Heart left ventricle (tissue), 16 donors: ENCODE measurements at regions of chr9 and their contacts with region 1.

Region 1: DNA sequence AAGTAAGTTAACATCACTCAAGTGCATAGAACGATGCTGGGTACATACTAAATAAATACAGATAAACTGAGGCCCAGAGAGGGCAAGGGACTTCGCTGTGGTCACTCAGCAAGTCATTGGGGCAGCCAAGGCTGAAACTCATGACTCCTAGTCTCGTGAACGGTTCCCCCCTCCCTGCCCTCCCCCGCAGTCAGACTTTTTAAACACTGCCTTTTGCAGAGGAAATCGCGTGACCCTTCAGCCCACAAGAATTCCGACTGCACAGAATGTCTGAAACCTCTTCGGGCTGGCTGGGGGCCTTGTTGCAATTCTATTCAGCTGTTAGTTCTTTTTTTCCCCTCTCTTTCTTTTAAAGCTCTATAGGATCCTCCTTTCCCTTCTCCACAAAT is 28.1 kb downstream of the NEK6 start:
- DNase-seq: peak; percentile 74 to 76 (median 74)
- ATAC-seq: peak in 3 of 4 donors; percentile 5 to 43 (median 30)
- H3K4me3 ChIP-seq: peak overlapping the region in 1 of 12 donors; percentile 28
- H3K27ac ChIP-seq: peak overlapping the region in 11 of 12 donors; percentile 43 to 88 (median 72)
- H3K4me1 ChIP-seq: peaks cover 15 to 94% (median 62%) of the 10 kb centered on the region in 12 donors
- H3K27me3 ChIP-seq: no peaks in the 10 kb centered on the region
- CTCF ChIP-seq: no peak
- POLR2A ChIP-seq: no peak

Region 2: DNA sequence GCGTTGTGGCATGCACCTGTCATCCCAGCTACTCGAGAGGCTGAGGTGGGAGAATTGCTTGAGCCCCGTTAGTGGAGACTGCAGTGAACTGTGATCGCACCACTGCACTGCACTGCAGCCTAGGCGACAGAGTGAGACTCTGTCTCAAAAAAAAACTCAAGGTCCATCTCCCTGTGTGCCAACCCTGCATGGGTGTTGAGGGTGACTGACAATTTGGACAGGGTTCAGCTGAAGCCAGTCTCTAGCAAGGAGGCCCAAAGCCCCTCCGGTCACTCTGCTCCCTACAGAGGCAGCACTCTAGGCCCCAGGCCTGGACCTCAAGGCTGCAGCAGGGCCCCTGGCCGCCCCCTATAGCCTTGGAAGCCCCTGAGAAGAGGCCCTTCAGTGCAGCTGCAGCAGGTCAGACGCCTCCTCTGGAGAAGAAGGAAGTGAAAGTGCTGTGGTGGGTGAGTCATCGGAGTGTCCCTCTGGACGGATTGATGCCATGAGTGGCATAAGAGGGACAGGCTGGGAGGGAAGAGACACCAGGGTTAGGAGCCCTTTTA is 67.4 kb before region 1 on chr9:
- intact Hi-C with region 1: loop called in 1 of 10 experiments (anchors 10 kb)
- DNase-seq: peak; percentile 42 to 70 (median 61)
- ATAC-seq: peak in 3 of 4 donors; percentile 49 to 70 (median 61)
- H3K4me3 ChIP-seq: no peak overlapping the region
- H3K27ac ChIP-seq: peak overlapping the region in 1 of 12 donors; percentile 86
- H3K4me1 ChIP-seq: peaks cover 2 to 100% (median 32%) of the 10 kb centered on the region in 12 donors
- H3K27me3 ChIP-seq: no peaks in the 10 kb centered on the region
- CTCF ChIP-seq: no peak
- POLR2A ChIP-seq: no peak

Region 3: DNA sequence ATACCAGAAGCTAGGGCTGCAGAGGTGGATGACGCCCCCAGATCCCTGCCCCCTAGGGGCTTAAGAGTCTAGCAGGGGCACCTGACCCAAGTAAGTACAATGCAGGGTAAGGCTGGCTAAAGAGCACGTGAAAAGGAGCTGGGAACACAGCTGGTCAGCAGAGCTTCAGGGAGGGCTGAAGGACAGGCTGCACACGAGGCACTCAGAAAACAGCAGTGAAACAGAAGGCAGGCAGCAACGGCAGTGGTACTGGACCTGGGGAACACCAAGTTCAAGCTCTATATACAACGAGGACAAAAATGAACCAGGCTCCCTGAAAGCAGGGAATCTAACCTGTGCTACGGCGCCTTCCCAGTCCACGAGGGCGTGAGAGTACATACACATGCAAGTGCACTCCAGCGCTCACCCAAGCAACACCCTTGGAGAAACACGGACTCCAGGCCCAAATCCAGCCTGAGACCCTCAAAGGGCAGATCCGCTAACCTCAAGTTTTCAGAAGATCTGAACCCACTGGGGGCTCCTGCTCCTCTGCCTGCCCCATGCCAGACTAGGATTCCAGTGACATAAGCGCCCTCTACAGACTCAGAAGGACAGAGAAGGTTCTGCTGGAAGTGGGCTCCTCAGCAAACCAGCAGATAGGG is 71.9 kb after region 1 on chr9:
- intact Hi-C with region 1: no loop called
- DNase-seq: no peak
- ATAC-seq: peak in 2 of 4 donors; percentile 6 to 46
- H3K4me3 ChIP-seq: no peak overlapping the region
- H3K27ac ChIP-seq: no peak overlapping the region
- H3K4me1 ChIP-seq: peaks cover 0 to 47% (median 13%) of the 10 kb centered on the region in 12 donors
- H3K27me3 ChIP-seq: no peaks in the 10 kb centered on the region
- CTCF ChIP-seq: peak in 1 of 12 donors; percentile 12
- POLR2A ChIP-seq: no peak

Region 4: GRCh38 chr9:124370896-124371582 is 85.1 kb after region 1 on chr9:
- intact Hi-C with region 1: no loop called
- DNase-seq: no peak
- ATAC-seq: no peak
- H3K4me3 ChIP-seq: no peak overlapping the region
- H3K27ac ChIP-seq: no peak overlapping the region
- H3K4me1 ChIP-seq: peaks cover 0 to 58% (median 25%) of the 10 kb centered on the region in 12 donors
- H3K27me3 ChIP-seq: no peaks in the 10 kb centered on the region
- CTCF ChIP-seq: no peak
- POLR2A ChIP-seq: no peak